Left cardiac atrium (tissue), 4 donors: ENCODE measurements at regions of chrX and their contacts with region 1.

Region 1: DNA sequence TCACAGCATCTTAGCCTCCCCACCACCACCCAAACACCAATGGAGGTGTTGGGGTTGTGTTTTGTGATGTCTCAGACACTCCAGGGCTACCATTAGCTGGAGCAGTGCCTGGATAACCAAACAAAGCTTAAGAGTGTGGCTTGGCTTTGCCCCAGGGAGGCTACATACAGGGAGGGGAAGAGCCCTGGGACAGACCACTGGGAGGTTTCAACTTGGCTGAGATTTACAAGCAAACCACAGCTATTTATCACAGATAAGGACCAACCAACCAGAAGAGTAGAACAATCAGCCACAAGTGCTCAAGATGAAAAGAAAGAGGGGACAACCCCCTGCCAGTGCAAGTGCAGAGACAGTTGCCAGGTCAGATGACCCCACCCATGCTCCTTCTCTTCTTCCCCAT is 24.1 kb downstream of the SOX3 start:
- DNase-seq: no peak
- ATAC-seq: no peak

Region 2: GRCh38 chrX:140456602-140457001 is 24.2 kb before region 1 on chrX:
- intact Hi-C with region 1: loop called in 1 of 2 experiments (anchors 2 kb)
- DNase-seq: no peak
- ATAC-seq: no peak